Activated CD4-positive, alpha-beta T cell treated with anti-CD3 and anti-CD28 coated beads, Interleukin-2, amount 10 ng/mL, durations not matched to agents 24 days and 14 days (primary cell): ENCODE measurements at regions of chr18 and their contacts with region 1.

Region 1: DNA sequence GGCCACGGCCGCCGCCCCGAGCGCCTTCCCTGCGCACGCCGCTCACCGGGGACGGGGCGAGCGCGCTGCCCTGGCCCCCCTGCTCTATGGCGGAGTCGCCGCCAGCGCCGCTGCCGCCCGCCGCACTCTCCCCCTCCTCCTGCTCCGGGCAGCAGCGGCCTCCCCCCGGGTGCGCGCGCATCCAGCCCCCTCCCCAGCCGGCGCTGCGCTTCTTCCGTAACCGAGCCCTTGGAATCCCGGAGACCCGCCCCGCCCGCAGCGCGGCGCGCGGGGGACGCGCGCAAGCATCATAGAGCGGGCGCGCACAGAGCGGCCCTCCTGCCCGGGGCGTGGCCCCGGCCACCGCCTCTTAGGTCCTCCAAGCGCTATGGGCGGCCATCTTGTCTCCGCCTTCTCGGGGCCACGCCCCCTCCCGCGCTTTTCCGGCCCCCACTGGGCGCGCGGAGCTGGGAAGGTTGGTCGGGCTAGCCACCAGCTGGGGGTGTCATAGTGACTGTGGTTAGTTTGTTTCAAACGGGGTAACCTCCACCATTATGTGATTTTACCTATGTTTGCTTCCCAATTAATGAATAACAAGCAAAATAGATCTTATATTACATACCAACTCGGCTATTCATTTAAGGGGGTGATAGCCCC is at the start of gene MBD2:
- DNase-seq: peak; percentile 99
- H3K4me3 Mint-ChIP-seq: peak within 1 kb of the TSS; percentile 92
- H3K27ac Mint-ChIP-seq: peak within 1 kb of the TSS; percentile 98
- H3K4me1 Mint-ChIP-seq: peaks cover 34% of the 10 kb centered on the region
- H3K27me3 Mint-ChIP-seq: no peaks in the 10 kb centered on the region
- total RNA-seq, gene MBD2: 195 and 200 TPM in 2 replicates

Region 2: GRCh38 chr18:53115876-53116585 is 1108.5 kb before region 1 on chr18:
- intact Hi-C with region 1: no loop called
- DNase-seq: no peak
- H3K4me3 Mint-ChIP-seq: no peak overlapping the region
- H3K27ac Mint-ChIP-seq: no peak overlapping the region
- H3K4me1 Mint-ChIP-seq: no peaks in the 10 kb centered on the region
- H3K27me3 Mint-ChIP-seq: no peaks in the 10 kb centered on the region

Region 3: GRCh38 chr18:54173980-54174630 is 50.4 kb before region 1 on chr18:
- intact Hi-C with region 1: loop called (anchors 1 kb)
- DNase-seq: peak; percentile 63
- H3K4me3 Mint-ChIP-seq: peak overlapping the region; percentile 39
- H3K27ac Mint-ChIP-seq: peak overlapping the region; percentile 90
- H3K4me1 Mint-ChIP-seq: peaks cover 61% of the 10 kb centered on the region
- H3K27me3 Mint-ChIP-seq: no peaks in the 10 kb centered on the region

Region 4: DNA sequence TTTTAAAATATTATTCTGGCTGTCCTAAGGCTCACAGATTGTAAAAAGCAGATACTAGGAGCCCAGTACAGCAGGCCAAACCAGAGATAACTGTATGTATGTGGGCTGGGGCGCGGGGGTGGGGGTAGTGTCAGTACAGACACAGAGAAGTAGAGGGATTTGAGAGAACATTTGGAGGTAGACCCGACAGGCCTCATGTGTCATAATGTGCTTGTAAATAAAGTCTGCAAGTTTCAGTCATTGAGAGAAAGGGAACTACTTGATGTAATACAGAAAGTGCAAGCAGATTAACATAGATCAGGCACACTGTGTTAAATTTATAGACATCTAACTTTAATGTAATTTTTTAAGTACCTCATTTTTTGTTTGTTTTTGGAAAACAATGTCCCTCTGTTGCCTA is 37.4 kb after region 1 on chr18:
- intact Hi-C with region 1: loop called (anchors 1 kb)
- DNase-seq: peak; percentile 69
- H3K4me3 Mint-ChIP-seq: peak overlapping the region; percentile 54
- H3K27ac Mint-ChIP-seq: peak overlapping the region; percentile 96
- H3K4me1 Mint-ChIP-seq: peaks cover 42% of the 10 kb centered on the region
- H3K27me3 Mint-ChIP-seq: no peaks in the 10 kb centered on the region

Region 5: DNA sequence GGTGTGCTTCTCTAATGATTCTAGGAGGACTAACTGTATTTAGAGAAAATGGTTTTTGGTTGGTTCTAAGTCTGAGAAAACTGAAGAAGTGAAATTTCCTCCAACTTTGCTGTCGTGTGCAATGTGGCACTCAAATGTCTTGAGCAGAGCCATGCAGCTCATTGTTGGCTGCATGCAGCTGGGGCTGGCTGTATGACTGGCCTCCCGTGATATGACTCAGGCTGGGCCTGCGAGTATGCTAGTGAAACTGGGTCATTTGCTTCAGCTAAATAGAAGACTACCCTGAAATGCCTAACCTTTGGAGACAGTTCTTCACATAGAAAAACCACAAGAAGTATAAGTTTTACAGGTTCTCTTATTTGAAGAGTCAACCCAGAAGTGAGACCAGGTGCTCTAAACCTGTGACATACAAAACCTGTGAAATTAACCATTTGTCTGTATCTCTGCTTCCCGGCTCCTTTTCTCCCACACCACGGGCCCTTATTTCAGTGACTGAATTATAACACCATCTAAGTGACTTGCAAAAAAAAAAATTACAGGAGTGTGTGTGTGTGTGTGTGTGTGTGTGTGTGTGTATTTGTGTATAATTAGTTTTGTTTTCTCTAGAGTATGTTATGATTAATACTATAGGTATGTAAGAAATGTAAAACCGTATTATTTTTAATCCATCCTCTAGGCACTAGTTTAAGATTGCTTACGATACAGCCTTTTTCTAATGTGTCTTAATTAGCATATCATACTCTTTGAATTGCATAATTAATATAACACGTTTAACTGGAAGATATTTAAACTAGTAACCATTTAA is 60.7 kb after region 1 on chr18:
- intact Hi-C with region 1: loop called (anchors 1 kb)
- DNase-seq: peak; percentile 82
- H3K4me3 Mint-ChIP-seq: peak overlapping the region; percentile 19
- H3K27ac Mint-ChIP-seq: peak overlapping the region; percentile 78
- H3K4me1 Mint-ChIP-seq: peaks cover 18% of the 10 kb centered on the region
- H3K27me3 Mint-ChIP-seq: no peaks in the 10 kb centered on the region

Region 6: GRCh38 chr18:54392543-54393023 is 168.1 kb after region 1 on chr18:
- intact Hi-C with region 1: loop called (anchors 1 kb)
- DNase-seq: peak; percentile 70
- H3K4me3 Mint-ChIP-seq: no peak overlapping the region
- H3K27ac Mint-ChIP-seq: no peak overlapping the region
- H3K4me1 Mint-ChIP-seq: peaks cover 27% of the 10 kb centered on the region
- H3K27me3 Mint-ChIP-seq: peaks cover 18% of the 10 kb centered on the region